ENCODE measurements at regions of chr12 and their contacts with region 1.

Region 1: DNA sequence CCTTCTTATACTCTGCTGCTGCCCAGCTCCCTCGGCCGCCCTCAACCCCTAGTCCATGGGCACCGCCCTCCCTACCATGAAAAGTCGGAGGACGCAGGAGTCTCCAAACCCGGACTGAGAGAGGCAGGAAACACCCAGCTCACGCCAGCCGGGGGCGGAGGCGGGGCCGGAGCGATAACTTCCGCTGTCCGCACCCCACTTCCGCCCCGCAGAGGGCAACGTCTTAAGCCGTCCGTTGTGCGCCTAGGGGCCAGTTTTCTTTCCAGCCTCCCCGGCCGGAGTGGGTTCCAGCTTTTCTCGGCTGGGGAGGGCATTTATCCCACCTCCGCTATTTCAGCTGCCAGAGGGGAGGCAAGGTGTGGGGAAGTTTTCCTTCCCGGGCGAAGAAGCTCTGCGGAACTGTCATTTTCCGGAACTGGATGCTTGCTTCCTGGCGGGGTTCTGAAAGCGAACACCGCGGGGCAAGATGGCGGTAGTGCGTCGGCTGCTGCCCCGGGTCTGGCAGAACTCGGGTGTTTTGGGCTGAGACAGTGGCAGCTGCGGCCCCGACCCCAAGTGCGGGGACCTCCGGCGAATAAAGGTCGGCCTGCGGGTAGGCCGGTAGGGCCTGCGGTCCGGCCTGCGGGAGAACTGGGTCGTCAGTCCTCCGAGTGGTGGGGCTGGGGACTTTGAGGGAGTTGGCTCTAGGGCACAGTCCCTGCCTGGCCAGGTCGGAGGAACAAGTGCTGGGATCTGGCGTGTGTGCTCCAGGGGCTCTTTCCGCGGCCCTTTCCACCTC is at the starts of genes KCTD10 and UBE3B:
- DNase-seq: peak; percentile 93 to 96
- ATAC-seq: peak; percentile 99
- H3K4me3 ChIP-seq: peak within 1 kb of the TSS; percentile 84 to 95
- H3K27ac ChIP-seq: peak within 1 kb of the TSS; percentile 2 to 93
- H3K4me1 ChIP-seq: peaks cover 3% of the 10 kb centered on the region in 2 donors
- H3K27me3 ChIP-seq: no peaks in the 10 kb centered on the region
- total RNA-seq, gene KCTD10: 157 to 199 TPM
- total RNA-seq, gene UBE3B: 36.2 to 40.2 TPM

Region 2: GRCh38 chr12:109377139-109377685 is 100.2 kb before region 1 on chr12:
- intact Hi-C with region 1: no loop called
- DNase-seq: no peak
- ATAC-seq: no peak
- H3K4me3 ChIP-seq: no peak overlapping the region
- H3K27ac ChIP-seq: no peak overlapping the region
- H3K4me1 ChIP-seq: no peaks in the 10 kb centered on the region
- H3K27me3 ChIP-seq: peaks cover 0 to 2% of the 10 kb centered on the region in 2 donors

Region 3: GRCh38 chr12:109428037-109428629 is 49.2 kb before region 1 on chr12:
- intact Hi-C with region 1: loop called (anchors 2 kb)
- DNase-seq: peak; percentile 86 to 94
- ATAC-seq: peak; percentile 91
- H3K4me3 ChIP-seq: no peak overlapping the region
- H3K27ac ChIP-seq: no peak overlapping the region
- H3K4me1 ChIP-seq: no peaks in the 10 kb centered on the region
- H3K27me3 ChIP-seq: no peaks in the 10 kb centered on the region

Region 4: DNA sequence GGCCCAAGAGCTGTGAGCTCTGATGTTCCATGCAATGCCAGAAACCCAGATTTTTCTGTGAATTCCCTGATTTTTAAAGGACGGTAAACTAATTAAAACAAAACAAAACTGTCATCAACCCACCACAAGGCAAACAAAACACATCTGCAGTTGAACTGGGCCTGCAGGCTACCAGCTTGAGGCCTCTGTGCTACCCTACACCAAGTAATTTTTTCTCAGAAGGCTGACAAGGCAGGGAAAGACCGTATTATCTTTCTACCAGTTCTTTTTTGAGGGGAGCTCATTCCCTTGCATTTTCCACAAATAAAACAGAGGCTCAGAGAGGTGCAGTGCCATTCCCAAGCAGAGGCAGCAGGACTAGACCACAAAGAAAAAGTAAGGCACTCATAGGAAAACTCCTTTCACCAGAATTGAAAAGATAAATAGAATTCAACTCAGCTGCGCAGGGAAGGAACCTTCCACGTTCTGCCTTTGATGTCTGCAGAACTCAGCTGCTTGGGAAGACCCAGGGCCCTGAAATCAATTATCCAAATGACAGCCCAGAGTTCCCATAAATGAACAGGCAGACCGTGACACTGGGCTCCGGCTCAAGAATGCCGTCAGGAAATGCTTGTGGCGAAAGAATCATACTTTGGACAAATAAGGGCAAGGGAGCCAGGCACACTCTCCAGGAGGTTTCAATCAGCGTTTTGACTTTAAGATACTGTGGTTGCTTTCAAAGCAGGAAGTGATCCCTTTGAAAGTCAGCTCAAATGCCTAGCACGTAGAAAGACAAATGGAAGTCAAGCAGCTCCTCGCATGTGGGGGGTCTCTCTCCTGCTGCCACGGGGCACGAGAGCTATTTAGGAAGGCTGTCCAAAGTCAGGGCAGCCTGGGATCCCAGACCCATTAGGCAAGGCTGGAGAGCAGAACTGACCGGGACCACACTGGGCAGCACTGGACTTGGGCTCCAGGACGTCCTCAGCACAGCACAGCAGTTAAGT is 14.4 kb before region 1 on chr12:
- intact Hi-C with region 1: loop called in 1 of 2 experiments (anchors 1 kb)
- DNase-seq: peak; percentile 92 to 93
- ATAC-seq: peak; percentile 87
- H3K4me3 ChIP-seq: no peak overlapping the region
- H3K27ac ChIP-seq: peak overlapping the region; percentile 96 to 99
- H3K4me1 ChIP-seq: peaks cover 6 to 25% of the 10 kb centered on the region in 2 donors
- H3K27me3 ChIP-seq: no peaks in the 10 kb centered on the region